ENCODE measurements at regions of chr1 and their contacts with region 1.

Region 1: DNA sequence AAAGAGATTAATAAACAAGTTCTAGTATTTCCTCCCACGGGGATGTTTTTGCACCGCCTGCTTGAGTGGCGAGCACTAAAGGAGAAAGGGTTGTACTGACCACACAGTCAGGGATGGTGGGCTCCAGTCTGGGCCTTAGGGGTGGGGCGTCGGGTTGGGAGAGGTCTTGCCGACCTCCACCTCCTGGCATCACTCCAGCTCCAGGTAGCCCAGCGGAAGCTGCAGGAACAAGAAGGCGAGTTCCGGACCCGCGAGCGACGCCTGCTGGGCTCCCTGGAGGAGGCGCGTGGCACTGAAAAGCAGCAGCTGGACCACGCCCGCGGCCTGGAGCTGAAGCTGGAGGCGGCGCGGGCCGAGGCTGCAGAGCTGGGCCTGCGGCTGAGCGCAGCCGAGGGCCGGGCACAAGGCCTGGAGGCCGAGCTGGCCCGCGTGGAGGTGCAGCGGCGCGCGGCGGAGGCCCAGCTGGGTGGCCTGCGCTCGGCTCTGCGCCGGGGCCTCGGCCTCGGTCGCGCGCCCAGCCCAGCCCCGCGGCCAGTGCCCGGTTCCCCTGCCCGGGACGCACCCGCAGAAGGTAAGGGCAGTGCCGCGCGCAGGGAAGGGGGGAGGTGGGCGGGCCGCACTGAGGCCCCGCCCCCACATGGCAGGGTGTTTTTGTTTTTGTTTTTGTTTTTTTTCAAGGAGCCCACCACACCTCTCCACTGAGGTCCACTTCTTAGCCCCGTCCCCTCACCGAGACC is 19.7 kb downstream of the MFAP2 start:
- DNase-seq: peak; percentile 53 to 85 (median 68)
- H3K4me3 ChIP-seq: peak overlapping the region; percentile 5
- H3K4me3 Mint-ChIP-seq: peak overlapping the region; percentile 72 to 92 (median 86)
- H3K27ac ChIP-seq: no peak overlapping the region
- H3K27ac Mint-ChIP-seq: peak overlapping the region in 7 of 8 donors; percentile 50 to 93 (median 84)
- H3K4me1 ChIP-seq: peaks cover 11% of the 10 kb centered on the region
- H3K4me1 Mint-ChIP-seq: peaks cover 9 to 15% (median 10%) of the 10 kb centered on the region in 3 donors
- H3K27me3 ChIP-seq: no peaks in the 10 kb centered on the region
- H3K27me3 Mint-ChIP-seq: no peaks in the 10 kb centered on the region

Region 2: GRCh38 chr1:16946646-16947045 is 14.1 kb before region 1 on chr1:
- CTCF ChIA-PET with region 1: interaction called, 30 read pairs
- POLR2A ChIA-PET with region 1: no interaction called
- DNase-seq: no peak
- H3K4me3 ChIP-seq: no peak overlapping the region
- H3K4me3 Mint-ChIP-seq: no peak overlapping the region
- H3K27ac ChIP-seq: no peak overlapping the region
- H3K27ac Mint-ChIP-seq: peak overlapping the region in 1 of 8 donors; percentile 41
- H3K4me1 ChIP-seq: no peaks in the 10 kb centered on the region
- H3K4me1 Mint-ChIP-seq: peaks cover 0 to 4% (median 0%) of the 10 kb centered on the region in 3 donors
- H3K27me3 ChIP-seq: no peaks in the 10 kb centered on the region
- H3K27me3 Mint-ChIP-seq: no peaks in the 10 kb centered on the region

Region 3: GRCh38 chr1:16986596-16987361 is 26.1 kb after region 1 on chr1:
- CTCF ChIA-PET with region 1: no interaction called
- POLR2A ChIA-PET with region 1: no interaction called
- DNase-seq: no peak
- H3K4me3 ChIP-seq: no peak overlapping the region
- H3K4me3 Mint-ChIP-seq: no peak overlapping the region
- H3K27ac ChIP-seq: no peak overlapping the region
- H3K27ac Mint-ChIP-seq: no peak overlapping the region
- H3K4me1 ChIP-seq: no peaks in the 10 kb centered on the region
- H3K4me1 Mint-ChIP-seq: no peaks in the 10 kb centered on the region
- H3K27me3 ChIP-seq: no peaks in the 10 kb centered on the region
- H3K27me3 Mint-ChIP-seq: peaks cover 9 to 16% of the 10 kb centered on the region in 2 donors

Measured in CD8-positive, alpha-beta memory T cell (primary cell).